Heart right ventricle (tissue), 16 donors: ENCODE measurements at regions of chr16 and their contacts with region 1.

Region 1: GRCh38 chr16:4957720-4958509 is at the start of gene SEC14L5:
- DNase-seq: peak; percentile 94 to 97
- ATAC-seq: peak; percentile 94 to 98 (median 96)
- H3K4me3 ChIP-seq: peak within 1 kb of the TSS; percentile 19 to 58 (median 48)
- H3K27ac ChIP-seq: peak within 1 kb of the TSS in 6 of 10 donors; percentile 0 to 58 (median 40)
- H3K4me1 ChIP-seq: peaks cover 0 to 25% (median 17%) of the 10 kb centered on the region in 9 donors
- H3K27me3 ChIP-seq: peaks cover 0 to 33% (median 0%) of the 10 kb centered on the region in 7 donors
- CTCF ChIP-seq: no peak
- total RNA-seq, gene SEC14L5: 4.7 to 28.4 (median 12.9) TPM

Region 2: GRCh38 chr16:4506450-4506849 is 451.5 kb before region 1 on chr16:
- intact Hi-C with region 1: loop called in 3 of 10 experiments (anchors 10 kb)
- DNase-seq: peak in 1 of 2 donors; percentile 67
- ATAC-seq: peak; percentile 58 to 87 (median 77)
- H3K4me3 ChIP-seq: no peak overlapping the region
- H3K27ac ChIP-seq: peak overlapping the region in 4 of 10 donors; percentile 3 to 93 (median 27)
- H3K4me1 ChIP-seq: peaks cover 8 to 63% (median 40%) of the 10 kb centered on the region in 9 donors
- H3K27me3 ChIP-seq: no peaks in the 10 kb centered on the region
- CTCF ChIP-seq: peak; percentile 65 to 85 (median 79)

Region 3: GRCh38 chr16:4693296-4693955 is 264.5 kb before region 1 on chr16 and contains the start of gene NUDT16L1:
- intact Hi-C with region 1: loop called in 1 of 10 experiments (anchors 5 kb)
- DNase-seq: peak; percentile 96 to 97
- ATAC-seq: peak; percentile 88 to 96 (median 94)
- H3K4me3 ChIP-seq: peak within 1 kb of the TSS; percentile 78 to 100 (median 90)
- H3K27ac ChIP-seq: peak within 1 kb of the TSS; percentile 68 to 96 (median 90)
- H3K4me1 ChIP-seq: peaks cover 15 to 38% (median 26%) of the 10 kb centered on the region in 9 donors
- H3K27me3 ChIP-seq: no peaks in the 10 kb centered on the region
- CTCF ChIP-seq: peak in 8 of 9 donors; percentile 19 to 62 (median 38)
- total RNA-seq, gene NUDT16L1: 34.1 to 65.7 (median 49.6) TPM

Region 4: GRCh38 chr16:4766874-4767628 is 190.9 kb before region 1 on chr16 and contains the start of gene ZNF500:
- intact Hi-C with region 1: loop called in 2 of 10 experiments (anchors 2 to 5 kb)
- DNase-seq: peak; percentile 99
- ATAC-seq: peak; percentile 94 to 97 (median 96)
- H3K4me3 ChIP-seq: peak within 1 kb of the TSS; percentile 79 to 99 (median 86)
- H3K27ac ChIP-seq: peak within 1 kb of the TSS; percentile 51 to 93 (median 88)
- H3K4me1 ChIP-seq: peaks cover 12 to 44% (median 32%) of the 10 kb centered on the region in 9 donors
- H3K27me3 ChIP-seq: no peaks in the 10 kb centered on the region
- CTCF ChIP-seq: peak in 2 of 9 donors; percentile 6 to 12
- total RNA-seq, gene ZNF500: 4.3 to 9.9 (median 8.1) TPM

Region 5: DNA sequence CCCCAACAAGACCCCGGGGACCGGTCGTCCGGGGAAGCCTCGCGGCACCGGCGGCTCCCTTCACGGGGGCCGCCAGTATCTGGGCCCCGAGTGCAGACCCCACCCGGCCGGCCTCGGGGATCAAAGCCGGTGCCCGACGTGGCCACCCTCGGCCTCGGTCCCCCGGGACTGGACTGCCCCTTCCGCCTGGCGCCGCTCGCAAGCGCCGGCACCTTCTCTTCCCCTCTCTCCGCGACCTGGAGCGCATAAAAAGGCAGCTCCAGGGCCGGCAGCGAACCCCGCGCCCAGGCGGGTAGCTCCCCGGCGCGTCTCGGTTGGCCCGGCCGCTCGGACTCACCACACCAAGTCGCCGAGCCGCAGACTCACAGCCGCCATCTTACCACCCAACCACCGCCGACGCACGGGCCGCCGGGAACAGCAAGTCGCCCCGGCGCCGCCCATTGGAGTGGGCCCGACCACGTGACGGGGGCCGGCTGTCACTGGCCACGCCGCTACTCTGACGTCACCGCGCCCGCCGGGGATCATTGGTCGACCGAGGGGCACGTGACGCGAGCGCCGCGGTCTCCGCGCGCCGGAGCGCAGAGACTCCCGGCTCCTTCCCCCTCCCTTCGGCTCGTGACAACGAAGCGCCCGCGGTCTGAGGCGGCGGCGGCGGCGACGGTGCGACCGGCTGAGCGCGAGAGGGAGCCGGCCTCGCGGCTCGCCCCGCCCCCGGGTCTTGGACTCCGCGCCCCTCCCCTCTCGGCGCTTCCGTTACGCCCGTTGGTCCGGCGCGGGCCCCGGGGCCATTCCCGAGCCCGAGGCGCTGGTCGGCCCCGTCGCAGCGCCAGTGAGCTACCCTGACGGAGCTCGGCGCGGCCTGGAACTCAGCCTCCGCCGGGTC is 110.8 kb before region 1 on chr16 and contains the starts of genes GLYR1 and UBN1:
- intact Hi-C with region 1: loop called in 4 of 10 experiments (anchors 5 kb)
- DNase-seq: peak; percentile 99 to 100
- ATAC-seq: peak; percentile 97 to 99 (median 98)
- H3K4me3 ChIP-seq: peak within 1 kb of the TSS; percentile 80 to 100 (median 96)
- H3K27ac ChIP-seq: peak within 1 kb of the TSS; percentile 85 to 99 (median 96)
- H3K4me1 ChIP-seq: peaks cover 17 to 65% (median 56%) of the 10 kb centered on the region in 9 donors
- H3K27me3 ChIP-seq: no peaks in the 10 kb centered on the region
- CTCF ChIP-seq: no peak
- total RNA-seq, gene GLYR1: 70.9 to 105 (median 75.1) TPM
- total RNA-seq, gene UBN1: 28.1 to 56.9 (median 31.1) TPM

Region 6: GRCh38 chr16:4892361-4893102 is 65.4 kb before region 1 on chr16:
- intact Hi-C with region 1: no loop called
- DNase-seq: peak; percentile 40 to 42
- ATAC-seq: peak; percentile 41 to 84 (median 70)
- H3K4me3 ChIP-seq: no peak overlapping the region
- H3K27ac ChIP-seq: peak overlapping the region in 7 of 10 donors; percentile 17 to 64 (median 43)
- H3K4me1 ChIP-seq: peaks cover 8 to 20% (median 14%) of the 10 kb centered on the region in 9 donors
- H3K27me3 ChIP-seq: no peaks in the 10 kb centered on the region
- CTCF ChIP-seq: no peak